GM12878 (cell line): ENCODE measurements at regions of chr2 and their contacts with region 1.

Region 1: GRCh38 chr2:105744091-105744908 is 412 bp upstream of the NCK2 start:
- DNase-seq: no peak
- ATAC-seq: peak; percentile 69
- H3K4me3 ChIP-seq: peak overlapping the region; percentile 59
- H3K27ac ChIP-seq: no peak overlapping the region
- H3K4me1 ChIP-seq: peaks cover 27% of the 10 kb centered on the region
- H3K27me3 ChIP-seq: no peaks in the 10 kb centered on the region; a peak in 1 of 4 replicates
- CTCF ChIP-seq: no peak
- EP300 ChIP-seq: no peak
- POLR2A ChIP-seq: peak; percentile 44; the same call in 1 of the 2 replicates
- RAD21 ChIP-seq: no peak

Region 2: GRCh38 chr2:105337124-105338019 is 406.9 kb before region 1 on chr2 and contains the start of gene C2orf49:
- CTCF ChIA-PET with region 1: no interaction called
- POLR2A ChIA-PET with region 1: no interaction called
- RAD21 ChIA-PET with region 1: no interaction called
- SMC1A ChIA-PET with region 1: no interaction called
- in situ Hi-C with region 1: no loop called
- intact Hi-C with region 1: loop called (anchors 10 kb)
- DNase-seq: no peak
- ATAC-seq: peak; percentile 95
- H3K4me3 ChIP-seq: peak within 1 kb of the TSS; percentile 99
- H3K27ac ChIP-seq: peak within 1 kb of the TSS; percentile 99
- H3K4me1 ChIP-seq: peaks cover 3% of the 10 kb centered on the region
- H3K27me3 ChIP-seq: no peaks in the 10 kb centered on the region
- CTCF ChIP-seq: no peak
- EP300 ChIP-seq: no peak
- POLR2A ChIP-seq: peak; percentile 86
- RAD21 ChIP-seq: no peak
- polyA plus RNA-seq, gene C2orf49: 15.7 to 19.5 TPM

Region 3: GRCh38 chr2:105757433-105757832 is 13.1 kb after region 1 on chr2:
- CTCF ChIA-PET with region 1: interaction called, 24 read pairs
- POLR2A ChIA-PET with region 1: interaction called, 27 read pairs
- RAD21 ChIA-PET with region 1: interaction called, 13 read pairs
- SMC1A ChIA-PET with region 1: interaction called, 21 read pairs
- in situ Hi-C with region 1: no loop called
- intact Hi-C with region 1: no loop called
- DNase-seq: no peak
- ATAC-seq: peak; percentile 65
- H3K4me3 ChIP-seq: peak overlapping the region; percentile 17; the same call in 1 of the 2 replicates
- H3K27ac ChIP-seq: peak overlapping the region; percentile 55
- H3K4me1 ChIP-seq: peaks cover 29% of the 10 kb centered on the region
- H3K27me3 ChIP-seq: no peaks in the 10 kb centered on the region
- CTCF ChIP-seq: no peak
- EP300 ChIP-seq: no peak
- POLR2A ChIP-seq: no peak
- RAD21 ChIP-seq: no peak

Region 4: GRCh38 chr2:105802587-105802986 is 58.3 kb after region 1 on chr2:
- CTCF ChIA-PET with region 1: interaction called, 29 read pairs
- POLR2A ChIA-PET with region 1: interaction called, 9 read pairs
- RAD21 ChIA-PET with region 1: interaction called, 40 read pairs
- SMC1A ChIA-PET with region 1: interaction called, 70 read pairs
- in situ Hi-C with region 1: no loop called
- intact Hi-C with region 1: loop called (anchors 2 kb)
- DNase-seq: peak; percentile 74
- ATAC-seq: peak; percentile 74
- H3K4me3 ChIP-seq: no peak overlapping the region
- H3K27ac ChIP-seq: peak overlapping the region; percentile 72
- H3K4me1 ChIP-seq: peaks cover 69% of the 10 kb centered on the region
- H3K27me3 ChIP-seq: no peaks in the 10 kb centered on the region
- CTCF ChIP-seq: no peak
- EP300 ChIP-seq: no peak
- POLR2A ChIP-seq: no peak
- RAD21 ChIP-seq: no peak

Region 5: DNA sequence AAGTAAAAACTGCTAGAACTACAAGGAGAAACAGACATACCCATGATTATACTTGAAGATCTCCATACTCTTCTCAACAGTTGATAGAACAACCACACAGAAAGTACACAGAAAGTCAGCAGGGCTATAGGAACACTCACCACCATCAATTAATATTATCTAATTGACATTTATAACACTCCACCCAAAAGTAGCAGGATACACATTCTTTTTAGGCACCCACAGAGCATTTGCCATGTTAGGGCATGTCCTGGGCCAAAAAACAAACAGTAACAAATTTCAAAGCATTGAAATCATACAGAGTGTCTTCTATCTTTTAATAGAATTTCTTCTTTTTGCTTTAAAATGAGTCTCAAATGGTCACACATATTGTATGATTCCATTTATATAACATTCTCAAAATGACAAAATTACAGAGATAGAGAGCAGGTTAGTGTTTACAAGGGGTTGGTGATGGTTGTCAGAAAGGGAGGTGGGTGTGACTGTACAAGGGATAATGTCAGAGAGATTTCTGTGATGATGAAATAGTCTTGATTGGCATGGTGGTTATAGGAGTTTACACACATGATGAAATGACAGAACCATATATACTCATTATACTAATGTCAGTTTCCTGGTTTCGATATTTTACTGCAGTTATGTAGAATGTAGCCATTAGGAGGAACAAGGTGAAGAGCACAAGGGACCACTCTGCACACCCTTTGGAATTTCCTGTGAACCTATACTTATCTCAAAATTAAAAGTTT is 83.2 kb after region 1 on chr2:
- CTCF ChIA-PET with region 1: interaction called, 3 read pairs
- POLR2A ChIA-PET with region 1: no interaction called
- RAD21 ChIA-PET with region 1: interaction called, 5 read pairs
- SMC1A ChIA-PET with region 1: interaction called, 19 read pairs
- in situ Hi-C with region 1: no loop called
- intact Hi-C with region 1: no loop called
- DNase-seq: no peak
- ATAC-seq: peak; percentile 76
- H3K4me3 ChIP-seq: no peak overlapping the region
- H3K27ac ChIP-seq: no peak overlapping the region
- H3K4me1 ChIP-seq: 0 out of 2 replicates have a peak, but pooled peaks cover 4% of the 10 kb centered on the region
- H3K27me3 ChIP-seq: no peaks in the 10 kb centered on the region
- CTCF ChIP-seq: no peak
- EP300 ChIP-seq: no peak
- POLR2A ChIP-seq: no peak
- RAD21 ChIP-seq: no peak

Region 6: GRCh38 chr2:105888625-105889400 is 144.5 kb after region 1 on chr2:
- CTCF ChIA-PET with region 1: no interaction called
- POLR2A ChIA-PET with region 1: no interaction called
- RAD21 ChIA-PET with region 1: no interaction called
- SMC1A ChIA-PET with region 1: no interaction called
- in situ Hi-C with region 1: no loop called
- intact Hi-C with region 1: loop called (anchors 5 kb)
- DNase-seq: no peak
- ATAC-seq: peak; percentile 44; the same call in 2 of the 3 replicates
- H3K4me3 ChIP-seq: no peak overlapping the region
- H3K27ac ChIP-seq: no peak overlapping the region
- H3K4me1 ChIP-seq: peaks cover 5% of the 10 kb centered on the region
- H3K27me3 ChIP-seq: no peaks in the 10 kb centered on the region
- CTCF ChIP-seq: peak in 2 of 3 experiments; percentile 16 to 23; a peak in 1 of 6 replicates
- EP300 ChIP-seq: no peak
- POLR2A ChIP-seq: no peak
- RAD21 ChIP-seq: peak; percentile 20; the same call in 1 of the 2 replicates

Region 7: DNA sequence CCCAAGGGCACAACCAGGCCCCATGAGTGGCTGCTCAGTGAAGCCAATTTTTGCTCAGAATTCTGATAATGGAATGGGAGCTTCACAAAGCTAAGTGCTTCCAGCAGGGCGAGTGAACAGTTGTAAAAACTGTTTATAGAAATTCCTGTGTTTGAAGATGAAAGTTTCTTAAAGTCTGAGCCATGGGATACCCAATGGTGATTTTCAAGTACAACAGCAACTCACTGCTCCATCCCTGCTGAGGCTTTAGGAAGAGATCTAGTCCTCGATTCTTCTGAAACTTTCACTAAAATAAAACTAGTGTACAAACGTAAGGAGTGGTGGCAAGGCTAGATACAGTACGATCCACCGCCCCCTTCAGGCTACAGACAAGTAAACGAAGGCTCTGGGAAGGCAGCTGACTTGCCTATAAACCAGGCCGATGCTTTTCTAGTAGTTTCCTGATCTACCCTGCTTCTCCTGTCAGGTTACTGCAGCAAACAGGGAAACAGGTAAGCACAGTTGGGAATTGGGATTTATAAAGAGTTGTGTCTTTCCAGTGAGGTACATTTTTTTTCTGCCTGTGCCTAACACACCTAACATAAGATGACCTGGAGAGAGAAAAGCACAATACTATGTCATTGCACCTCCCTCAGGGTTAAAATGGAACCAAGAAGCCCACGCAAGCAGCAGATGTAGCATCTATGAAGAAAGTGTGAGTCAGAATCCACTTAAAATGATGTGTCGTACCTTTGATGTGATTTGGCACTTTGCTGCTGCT is 341.1 kb after region 1 on chr2:
- CTCF ChIA-PET with region 1: interaction called, 22 read pairs
- POLR2A ChIA-PET with region 1: no interaction called
- RAD21 ChIA-PET with region 1: interaction called, 5 read pairs
- SMC1A ChIA-PET with region 1: interaction called, 9 read pairs
- in situ Hi-C with region 1: no loop called
- intact Hi-C with region 1: loop called (anchors 1 kb)
- DNase-seq: no peak
- ATAC-seq: peak; percentile 89
- H3K4me3 ChIP-seq: no peak overlapping the region
- H3K27ac ChIP-seq: no peak overlapping the region
- H3K4me1 ChIP-seq: no peaks in the 10 kb centered on the region
- H3K27me3 ChIP-seq: no peaks in the 10 kb centered on the region
- CTCF ChIP-seq: peak; percentile 34 to 46 (median 42); a peak in 4 of 6 replicates
- EP300 ChIP-seq: no peak
- POLR2A ChIP-seq: no peak
- RAD21 ChIP-seq: peak; percentile 52; the same call in 1 of the 2 replicates